ENCODE measurements at regions of chr3 and their contacts with region 1.

Region 1: GRCh38 chr3:87805670-87806069 is 253.1 kb downstream of the CGGBP1 start:
- DNase-seq: no peak
- H3K4me3 ChIP-seq: no peak overlapping the region
- H3K27ac ChIP-seq: no peak overlapping the region
- H3K4me1 ChIP-seq: no peaks in the 10 kb centered on the region
- H3K27me3 ChIP-seq: no peaks in the 10 kb centered on the region
- CTCF ChIP-seq: no peak
- POLR2A ChIP-seq: no peak

Region 2: DNA sequence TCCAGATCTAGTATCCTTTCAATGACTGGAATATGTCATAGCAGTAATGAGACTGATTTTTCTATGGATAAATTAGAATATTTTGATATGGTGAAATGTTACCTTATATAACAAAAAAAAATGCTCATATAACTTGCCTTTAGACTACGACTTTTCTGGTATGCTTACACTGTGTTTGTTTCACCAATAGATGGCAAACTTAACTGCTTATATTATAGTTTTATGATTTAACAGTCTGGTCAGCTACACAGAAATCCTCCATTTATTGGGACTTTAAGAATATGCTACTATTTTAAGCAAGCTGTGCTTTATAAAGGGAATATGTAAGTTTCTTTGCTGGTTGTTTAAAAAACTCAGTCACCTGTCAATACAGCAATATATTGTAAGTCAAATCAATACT is 1020.3 kb before region 1 on chr3:
- intact Hi-C with region 1: loop called (anchors 10 kb)
- DNase-seq: no peak
- H3K4me3 ChIP-seq: no peak overlapping the region
- H3K27ac ChIP-seq: no peak overlapping the region
- H3K4me1 ChIP-seq: no peaks in the 10 kb centered on the region
- H3K27me3 ChIP-seq: no peaks in the 10 kb centered on the region
- CTCF ChIP-seq: peak in 1 of 3 donors; percentile 21
- POLR2A ChIP-seq: no peak

Region 3: DNA sequence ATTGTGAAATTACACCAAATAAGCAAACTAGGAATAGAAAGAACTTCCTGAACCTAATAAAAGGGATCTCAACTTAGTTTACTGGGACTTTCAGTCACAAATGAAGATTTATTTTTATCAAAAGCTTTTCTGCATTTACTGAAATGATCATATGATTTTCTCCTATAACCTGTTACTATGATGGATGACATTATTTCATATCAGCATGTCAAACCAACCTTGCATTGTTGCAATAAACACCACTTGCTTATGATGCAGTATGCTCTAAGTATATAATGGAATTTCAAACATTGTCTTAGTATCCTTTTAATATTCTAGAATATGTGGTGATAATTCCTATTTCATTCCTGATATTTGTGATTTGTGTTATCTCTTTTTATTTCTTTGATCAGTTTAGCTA is 49.8 kb before region 1 on chr3:
- intact Hi-C with region 1: no loop called
- DNase-seq: no peak
- H3K4me3 ChIP-seq: no peak overlapping the region
- H3K27ac ChIP-seq: no peak overlapping the region
- H3K4me1 ChIP-seq: no peaks in the 10 kb centered on the region
- H3K27me3 ChIP-seq: no peaks in the 10 kb centered on the region
- CTCF ChIP-seq: no peak
- POLR2A ChIP-seq: no peak

Region 4: GRCh38 chr3:87855616-87856015 is 49.9 kb after region 1 on chr3:
- intact Hi-C with region 1: no loop called
- DNase-seq: no peak
- H3K4me3 ChIP-seq: no peak overlapping the region
- H3K27ac ChIP-seq: no peak overlapping the region
- H3K4me1 ChIP-seq: no peaks in the 10 kb centered on the region
- H3K27me3 ChIP-seq: no peaks in the 10 kb centered on the region
- CTCF ChIP-seq: no peak
- POLR2A ChIP-seq: no peak